HCT116 (cell line): ENCODE measurements at regions of chr14 and their contacts with region 1.

Region 1: DNA sequence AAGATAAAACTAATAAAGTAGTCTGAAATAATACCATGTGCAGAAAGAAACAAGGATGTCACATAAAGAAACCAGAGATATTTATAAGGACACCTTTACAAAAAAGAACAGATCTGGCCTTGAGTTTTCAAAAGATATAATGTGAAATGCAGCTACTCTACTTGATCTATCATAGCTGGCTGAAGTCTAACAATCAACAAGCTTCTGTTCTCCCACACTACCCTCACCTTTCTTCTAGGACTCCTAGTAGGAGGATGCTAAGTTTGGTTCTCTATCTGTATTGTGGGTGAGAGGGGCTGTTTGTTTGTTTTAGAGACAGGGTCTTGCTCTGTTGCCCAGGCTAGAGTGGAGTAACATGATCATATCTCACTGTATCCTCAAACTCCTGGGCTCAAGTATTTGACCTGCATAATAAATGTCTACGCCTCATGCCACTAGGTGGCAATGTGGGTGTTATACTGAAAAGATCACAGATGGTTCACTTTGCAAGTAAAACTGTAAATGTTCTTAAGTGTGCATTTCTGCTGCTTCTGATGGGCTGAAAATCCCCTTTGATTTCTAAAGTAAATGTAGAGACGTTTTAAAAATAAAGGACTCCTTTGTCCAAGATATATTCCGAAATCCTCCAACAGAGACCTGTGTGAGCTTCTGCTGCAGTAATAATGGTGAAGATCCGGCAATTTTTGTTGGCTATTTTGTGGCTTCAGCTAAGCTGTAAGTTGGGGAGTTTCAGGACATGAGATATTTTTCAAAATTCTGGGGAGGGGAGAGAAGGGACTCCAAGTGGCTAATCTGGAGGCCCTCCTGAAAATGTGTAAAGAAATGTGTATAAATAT is 269.3 kb downstream of the DAD1 start:
- DNase-seq: peak; percentile 53
- ATAC-seq: peak; percentile 93
- H3K4me3 ChIP-seq: no peak overlapping the region
- H3K27ac ChIP-seq: no peak overlapping the region
- H3K4me1 ChIP-seq: no peaks in the 10 kb centered on the region
- H3K27me3 ChIP-seq: peaks cover 50% of the 10 kb centered on the region
- CTCF ChIP-seq: peak; percentile 60 to 79 (median 68); a peak in 5 of 6 replicates
- POLR2A ChIP-seq: no peak
- RAD21 ChIP-seq: peak; percentile 63

Region 2: DNA sequence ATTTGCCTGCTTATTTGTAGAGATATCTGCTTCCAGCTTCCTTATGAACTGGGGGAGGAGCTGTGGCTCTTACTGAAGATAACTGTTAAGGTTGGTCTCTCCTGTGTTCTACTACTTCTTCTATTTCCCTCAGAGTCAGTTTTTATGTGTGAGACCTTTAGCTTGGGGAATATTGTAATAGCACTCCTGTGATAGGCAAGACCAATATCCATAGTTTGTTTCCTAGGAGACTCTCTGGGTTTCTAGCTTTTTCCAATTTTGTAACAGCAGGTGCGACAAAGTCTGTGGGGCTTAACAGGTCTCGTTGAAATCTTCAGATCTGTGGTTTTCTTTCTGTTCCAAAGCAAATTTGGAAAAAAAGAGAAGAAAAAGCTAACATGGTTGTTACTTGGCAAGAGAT is 739.8 kb before region 1 on chr14 and contains the start of gene OR10G3:
- CTCF ChIA-PET with region 1: no interaction called
- POLR2A ChIA-PET with region 1: no interaction called
- RAD21 ChIA-PET with region 1: no interaction called
- intact Hi-C with region 1: no loop called
- DNase-seq: no peak
- ATAC-seq: no peak
- H3K4me3 ChIP-seq: no peak within 1 kb of the TSS
- H3K27ac ChIP-seq: no peak within 1 kb of the TSS
- H3K4me1 ChIP-seq: no peaks in the 10 kb centered on the region
- H3K27me3 ChIP-seq: no peaks in the 10 kb centered on the region; the same call in 1 of the 2 replicates
- CTCF ChIP-seq: no peak
- POLR2A ChIP-seq: no peak
- RAD21 ChIP-seq: no peak
- total RNA-seq, gene OR10G3: not detected

Region 3: DNA sequence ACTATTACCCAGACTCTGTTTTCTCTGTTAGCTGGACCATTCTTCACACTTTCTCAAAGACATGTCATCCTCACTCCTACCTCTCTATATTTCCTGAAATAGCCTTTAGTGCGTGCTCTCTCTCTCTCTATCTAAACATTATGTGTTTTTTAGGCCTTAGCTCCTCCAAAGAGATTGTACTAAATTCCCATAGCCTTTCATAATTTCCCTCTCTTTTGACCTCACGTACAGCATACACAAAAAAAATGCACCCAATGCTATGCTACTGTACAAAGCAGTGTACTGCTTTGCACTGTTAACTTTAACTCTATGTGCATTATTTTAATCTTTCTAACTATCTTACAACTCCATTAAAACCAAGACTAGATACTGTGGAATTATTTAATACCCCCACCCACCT is 19.1 kb before region 1 on chr14:
- CTCF ChIA-PET with region 1: interaction called, 10 read pairs
- POLR2A ChIA-PET with region 1: no interaction called
- RAD21 ChIA-PET with region 1: no interaction called
- intact Hi-C with region 1: no loop called
- DNase-seq: no peak
- ATAC-seq: no peak
- H3K4me3 ChIP-seq: no peak overlapping the region
- H3K27ac ChIP-seq: no peak overlapping the region
- H3K4me1 ChIP-seq: peaks cover 3 to 9% of the 10 kb centered on the region in 2 experiments
- H3K27me3 ChIP-seq: peaks cover 71% of the 10 kb centered on the region
- CTCF ChIP-seq: no peak
- POLR2A ChIP-seq: no peak
- RAD21 ChIP-seq: no peak

Region 4: GRCh38 chr14:22333422-22334276 is 13.9 kb after region 1 on chr14:
- CTCF ChIA-PET with region 1: interaction called, 17 read pairs
- POLR2A ChIA-PET with region 1: no interaction called
- RAD21 ChIA-PET with region 1: interaction called in 1 of 2 experiments, 3 read pairs
- intact Hi-C with region 1: no loop called
- DNase-seq: peak; percentile 79
- ATAC-seq: peak; percentile 89
- H3K4me3 ChIP-seq: peak overlapping the region in 1 of 2 experiments; percentile 42; a peak in 3 of 4 replicates
- H3K27ac ChIP-seq: peak overlapping the region; percentile 50; the same call in 1 of the 2 replicates
- H3K4me1 ChIP-seq: peaks cover 21 to 25% of the 10 kb centered on the region in 2 experiments
- H3K27me3 ChIP-seq: no peaks in the 10 kb centered on the region
- CTCF ChIP-seq: no peak
- POLR2A ChIP-seq: no peak
- RAD21 ChIP-seq: no peak

Region 5: GRCh38 chr14:22370084-22370847 is 50.5 kb after region 1 on chr14:
- CTCF ChIA-PET with region 1: interaction called, 113 read pairs
- POLR2A ChIA-PET with region 1: no interaction called
- RAD21 ChIA-PET with region 1: interaction called, 11 to 13 read pairs
- intact Hi-C with region 1: loop called (anchors 1 kb)
- DNase-seq: no peak
- ATAC-seq: no peak
- H3K4me3 ChIP-seq: no peak overlapping the region
- H3K27ac ChIP-seq: no peak overlapping the region
- H3K4me1 ChIP-seq: no peaks in the 10 kb centered on the region
- H3K27me3 ChIP-seq: peaks cover 17% of the 10 kb centered on the region; the same call in 1 of the 2 replicates
- CTCF ChIP-seq: no peak
- POLR2A ChIP-seq: no peak
- RAD21 ChIP-seq: no peak